Mammary epithelial cell (primary cell): ENCODE measurements at regions of chr3 and their contacts with region 1.

Region 1: DNA sequence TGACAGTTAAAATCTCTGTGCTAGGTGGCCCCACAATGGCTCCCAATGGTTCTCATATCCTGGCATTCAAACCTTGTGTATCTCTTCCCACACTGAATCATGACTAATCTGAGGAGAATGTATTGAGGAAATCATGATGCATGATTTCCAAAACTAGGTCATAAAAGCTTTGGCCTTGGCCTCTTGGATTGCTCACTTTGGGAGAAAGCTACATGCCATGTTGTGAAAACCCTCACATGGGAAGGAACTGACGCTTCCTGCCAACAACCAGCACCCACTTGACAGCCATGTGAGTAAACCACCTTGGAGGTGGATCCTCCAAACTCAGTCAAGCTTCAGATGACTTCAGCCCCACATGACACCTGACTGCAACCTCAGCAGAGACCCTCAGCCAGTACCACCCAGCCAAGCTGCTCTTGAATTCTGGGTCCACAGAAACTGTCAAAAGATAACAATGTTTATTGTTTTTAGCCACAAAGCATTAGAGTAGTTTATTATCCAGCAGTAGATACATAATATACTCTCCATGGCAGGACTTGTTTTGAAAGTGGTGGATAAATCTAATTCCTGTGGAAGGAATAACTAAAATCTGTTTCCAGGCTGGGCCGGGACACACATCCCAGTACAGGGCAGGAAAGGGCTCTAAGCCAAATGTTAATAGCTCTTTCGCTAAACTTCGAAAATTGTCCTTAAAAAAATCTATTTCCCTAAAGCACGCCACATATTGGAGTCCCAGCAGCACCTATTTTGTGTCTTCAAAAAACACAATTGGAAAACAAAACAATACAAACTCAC is 1.0 kb upstream of the ZNF620 start:
- DNase-seq: peak; percentile 97
- H3K4me3 ChIP-seq: no peak overlapping the region
- H3K27ac ChIP-seq: no peak overlapping the region
- H3K4me1 ChIP-seq: peaks cover 17% of the 10 kb centered on the region
- H3K27me3 ChIP-seq: no peaks in the 10 kb centered on the region
- CTCF ChIP-seq: no peak

Region 2: DNA sequence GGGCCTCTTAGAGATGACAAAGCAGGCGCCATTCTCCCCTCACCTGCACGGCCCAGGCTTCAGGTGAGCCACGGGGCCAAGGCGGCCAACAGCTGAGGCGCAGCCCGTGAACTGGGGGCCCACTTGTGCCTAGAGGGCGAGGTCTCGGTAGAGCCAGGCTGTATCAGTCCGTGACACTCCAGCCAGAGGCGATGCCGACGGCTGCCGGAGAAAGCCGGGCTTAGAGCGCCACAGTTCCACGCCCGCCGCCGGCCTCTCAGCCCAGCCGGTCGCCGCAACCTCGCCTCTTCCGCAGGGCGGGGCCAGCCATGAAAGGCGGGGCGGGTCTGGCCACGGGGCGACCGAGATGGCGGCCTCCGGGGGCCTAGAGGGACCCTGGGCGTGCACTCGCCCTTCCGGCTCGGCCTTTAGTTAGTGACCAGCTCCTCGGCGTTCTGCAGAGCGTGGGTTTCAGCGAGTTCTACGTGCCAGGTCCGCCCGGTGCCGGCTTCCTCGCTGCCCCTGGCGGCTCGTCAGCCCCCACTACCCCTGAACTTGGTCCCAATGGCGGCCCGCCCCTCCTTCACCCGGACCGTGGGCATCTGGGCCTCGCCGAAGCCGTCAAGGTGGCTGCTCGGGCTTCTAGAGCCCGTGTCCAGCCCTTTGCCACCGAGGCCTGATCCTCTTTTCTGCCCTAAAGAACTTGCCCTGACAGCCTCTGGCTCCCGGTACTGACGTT is 19.9 kb after region 1 on chr3 and contains the start of gene ZNF621:
- CTCF ChIA-PET with region 1: no interaction called
- dilution Hi-C with region 1: no loop called
- in situ Hi-C with region 1: no loop called
- intact Hi-C with region 1: loop called (anchors 1 kb)
- DNase-seq: peak; percentile 84
- H3K4me3 ChIP-seq: peak within 1 kb of the TSS; percentile 76 to 84 (median 78)
- H3K27ac ChIP-seq: peak within 1 kb of the TSS; percentile 84
- H3K4me1 ChIP-seq: peaks cover 13% of the 10 kb centered on the region
- H3K27me3 ChIP-seq: no peaks in the 10 kb centered on the region
- CTCF ChIP-seq: no peak
- total RNA-seq, gene ZNF621: 20.0 to 32.4 TPM